Activated CD4-positive, alpha-beta memory T cell treated with anti-CD3 and anti-CD28 coated beads for 36 hours (primary cell): ENCODE measurements at regions of chr19 and their contacts with region 1.

Region 1: GRCh38 chr19:47428177-47428894 is 9.0 kb upstream of the MEIS3 start:
- DNase-seq: peak; percentile 92
- H3K4me3 Mint-ChIP-seq: no peak overlapping the region
- H3K27ac Mint-ChIP-seq: no peak overlapping the region
- H3K4me1 Mint-ChIP-seq: peaks cover 10% of the 10 kb centered on the region
- H3K27me3 Mint-ChIP-seq: peaks cover 40% of the 10 kb centered on the region

Region 2: GRCh38 chr19:47296036-47296435 is 132.3 kb before region 1 on chr19:
- CTCF ChIA-PET with region 1: interaction called, 24 read pairs
- POLR2A ChIA-PET with region 1: no interaction called
- intact Hi-C with region 1: loop called (anchors 2 kb)
- DNase-seq: peak; percentile 79
- H3K4me3 Mint-ChIP-seq: no peak overlapping the region
- H3K27ac Mint-ChIP-seq: no peak overlapping the region
- H3K4me1 Mint-ChIP-seq: peaks cover 2% of the 10 kb centered on the region
- H3K27me3 Mint-ChIP-seq: no peaks in the 10 kb centered on the region

Region 3: GRCh38 chr19:47348819-47349795 is 79.2 kb before region 1 on chr19 and contains the start of gene DHX34:
- CTCF ChIA-PET with region 1: interaction called, 17 read pairs
- POLR2A ChIA-PET with region 1: no interaction called
- intact Hi-C with region 1: no loop called
- DNase-seq: peak; percentile 100
- H3K4me3 Mint-ChIP-seq: peak within 1 kb of the TSS; percentile 97
- H3K27ac Mint-ChIP-seq: peak within 1 kb of the TSS; percentile 89
- H3K4me1 Mint-ChIP-seq: peaks cover 43% of the 10 kb centered on the region
- H3K27me3 Mint-ChIP-seq: no peaks in the 10 kb centered on the region
- total RNA-seq, gene DHX34: 12.7 to 15.7 TPM

Region 4: GRCh38 chr19:47391510-47392223 is 36.7 kb before region 1 on chr19:
- CTCF ChIA-PET with region 1: interaction called, 14 read pairs
- POLR2A ChIA-PET with region 1: no interaction called
- intact Hi-C with region 1: no loop called
- DNase-seq: peak; percentile 87
- H3K4me3 Mint-ChIP-seq: no peak overlapping the region
- H3K27ac Mint-ChIP-seq: no peak overlapping the region
- H3K4me1 Mint-ChIP-seq: no peaks in the 10 kb centered on the region
- H3K27me3 Mint-ChIP-seq: peaks cover 5% of the 10 kb centered on the region

Region 5: DNA sequence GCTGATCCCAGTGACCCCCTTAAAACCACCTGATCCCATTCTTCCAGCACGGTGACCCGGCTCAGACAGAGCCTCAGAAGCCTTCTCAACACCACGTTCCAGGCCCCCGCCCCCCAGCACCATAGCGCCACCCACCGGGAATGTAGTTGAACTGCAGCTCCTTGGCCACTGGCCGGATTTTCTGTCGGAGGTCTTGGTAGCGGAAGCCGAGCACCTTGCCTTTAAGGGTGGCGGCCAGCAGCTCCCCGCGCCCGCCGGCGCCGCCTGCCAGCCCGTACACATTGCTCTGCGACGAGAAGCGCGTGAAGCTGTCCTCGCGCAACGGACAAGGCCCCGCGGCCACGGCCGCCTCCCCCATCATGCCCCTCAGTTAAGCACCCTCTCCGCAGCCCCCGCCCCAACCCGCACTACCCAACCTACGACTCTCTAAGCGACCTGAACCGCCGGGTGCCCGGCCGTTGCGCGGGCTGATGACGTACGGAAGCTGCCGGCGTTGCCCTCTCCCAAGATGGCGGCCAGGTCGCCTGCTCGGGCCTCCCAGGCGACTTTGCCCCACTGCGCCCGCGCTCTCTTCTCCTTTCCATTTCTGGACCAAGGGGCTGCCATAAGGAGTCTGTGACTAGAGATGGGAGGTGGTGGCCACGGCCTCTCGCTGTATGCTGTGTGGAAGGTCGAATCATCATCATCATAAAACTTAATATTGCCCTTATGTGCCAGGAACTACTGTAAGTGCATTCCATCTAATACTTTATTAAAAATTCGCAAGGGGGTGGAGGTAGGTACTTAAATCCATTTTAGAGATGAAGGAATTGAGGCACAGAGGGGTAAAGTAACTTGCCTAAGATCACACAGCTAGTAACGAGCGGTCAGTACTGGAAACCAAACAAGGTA is 55.7 kb after region 1 on chr19 and contains the start of gene KPTN:
- CTCF ChIA-PET with region 1: interaction called, 71 read pairs
- POLR2A ChIA-PET with region 1: no interaction called
- intact Hi-C with region 1: no loop called
- DNase-seq: peak; percentile 94
- H3K4me3 Mint-ChIP-seq: peak within 1 kb of the TSS; percentile 95
- H3K27ac Mint-ChIP-seq: peak within 1 kb of the TSS; percentile 94
- H3K4me1 Mint-ChIP-seq: peaks cover 20% of the 10 kb centered on the region
- H3K27me3 Mint-ChIP-seq: no peaks in the 10 kb centered on the region
- total RNA-seq, gene KPTN: 7.0 to 9.2 TPM

Region 6: GRCh38 chr19:47697863-47698609 is 269.7 kb after region 1 on chr19:
- CTCF ChIA-PET with region 1: interaction called, 193 read pairs
- POLR2A ChIA-PET with region 1: no interaction called
- intact Hi-C with region 1: no loop called
- DNase-seq: peak; percentile 74
- H3K4me3 Mint-ChIP-seq: no peak overlapping the region
- H3K27ac Mint-ChIP-seq: no peak overlapping the region
- H3K4me1 Mint-ChIP-seq: no peaks in the 10 kb centered on the region
- H3K27me3 Mint-ChIP-seq: no peaks in the 10 kb centered on the region

Region 7: DNA sequence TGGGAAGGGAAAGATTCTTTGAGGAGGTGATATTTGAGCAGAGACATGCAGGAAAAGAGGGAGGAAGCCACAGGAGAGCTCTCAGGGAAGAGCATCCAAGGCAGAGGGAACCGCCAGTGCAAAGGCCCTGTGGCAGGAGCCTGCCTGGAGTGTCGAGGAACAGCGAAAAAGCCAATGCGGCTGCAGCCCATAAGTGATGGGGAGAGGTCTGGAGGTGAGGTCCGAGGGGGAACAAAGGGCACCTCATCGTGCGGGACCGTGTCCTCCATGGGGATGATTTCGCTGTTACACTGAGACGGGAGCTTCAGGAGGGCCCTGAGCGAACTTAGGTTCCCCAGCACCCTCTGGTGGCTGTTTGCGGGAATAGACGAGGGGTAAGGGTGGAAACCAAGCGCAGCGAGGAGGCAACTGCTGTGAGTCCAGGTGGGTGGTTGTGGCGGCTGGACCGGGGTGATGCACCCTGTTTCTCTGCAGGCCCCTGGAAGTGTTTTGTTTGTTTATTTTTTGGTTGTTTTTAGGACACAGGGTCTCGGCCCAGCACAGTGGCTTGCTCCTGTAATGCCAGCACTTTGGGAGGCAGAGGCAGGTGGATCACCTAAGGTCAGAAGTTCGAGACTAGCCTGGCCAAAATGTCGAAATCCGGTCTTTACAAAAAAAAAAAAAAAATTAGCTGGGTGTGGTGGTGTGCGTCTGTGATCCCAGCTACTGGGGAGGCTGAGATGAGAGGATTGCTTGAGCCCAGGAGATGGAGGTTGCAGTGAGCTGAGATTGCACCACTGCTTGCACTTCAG is 279.0 kb after region 1 on chr19:
- CTCF ChIA-PET with region 1: interaction called, 193 read pairs
- POLR2A ChIA-PET with region 1: no interaction called
- intact Hi-C with region 1: no loop called
- DNase-seq: peak; percentile 88
- H3K4me3 Mint-ChIP-seq: no peak overlapping the region
- H3K27ac Mint-ChIP-seq: no peak overlapping the region
- H3K4me1 Mint-ChIP-seq: no peaks in the 10 kb centered on the region
- H3K27me3 Mint-ChIP-seq: peaks cover 6% of the 10 kb centered on the region